ENCODE measurements at regions of chr2 and their contacts with region 1.

Region 1: GRCh38 chr2:210324458-210324857 is 9.5 kb upstream of the MYL1 start:
- DNase-seq: peak in 1 of 2 donors; percentile 58
- ATAC-seq: peak; percentile 83 to 96
- H3K4me3 ChIP-seq: peak overlapping the region; percentile 5 to 39 (median 20)
- H3K27ac ChIP-seq: peak overlapping the region; percentile 61 to 85 (median 76)
- H3K4me1 ChIP-seq: peaks cover 18 to 20% of the 10 kb centered on the region in 2 donors
- H3K27me3 ChIP-seq: no peaks in the 10 kb centered on the region
- CTCF ChIP-seq: no peak
- POLR2A ChIP-seq: no peak

Region 2: GRCh38 chr2:210086292-210086691 is 238.2 kb before region 1 on chr2:
- in situ Hi-C with region 1: no loop called
- intact Hi-C with region 1: no loop called
- DNase-seq: no peak
- ATAC-seq: no peak
- H3K4me3 ChIP-seq: no peak overlapping the region
- H3K27ac ChIP-seq: no peak overlapping the region
- H3K4me1 ChIP-seq: no peaks in the 10 kb centered on the region
- H3K27me3 ChIP-seq: no peaks in the 10 kb centered on the region
- CTCF ChIP-seq: no peak
- POLR2A ChIP-seq: no peak

Region 3: DNA sequence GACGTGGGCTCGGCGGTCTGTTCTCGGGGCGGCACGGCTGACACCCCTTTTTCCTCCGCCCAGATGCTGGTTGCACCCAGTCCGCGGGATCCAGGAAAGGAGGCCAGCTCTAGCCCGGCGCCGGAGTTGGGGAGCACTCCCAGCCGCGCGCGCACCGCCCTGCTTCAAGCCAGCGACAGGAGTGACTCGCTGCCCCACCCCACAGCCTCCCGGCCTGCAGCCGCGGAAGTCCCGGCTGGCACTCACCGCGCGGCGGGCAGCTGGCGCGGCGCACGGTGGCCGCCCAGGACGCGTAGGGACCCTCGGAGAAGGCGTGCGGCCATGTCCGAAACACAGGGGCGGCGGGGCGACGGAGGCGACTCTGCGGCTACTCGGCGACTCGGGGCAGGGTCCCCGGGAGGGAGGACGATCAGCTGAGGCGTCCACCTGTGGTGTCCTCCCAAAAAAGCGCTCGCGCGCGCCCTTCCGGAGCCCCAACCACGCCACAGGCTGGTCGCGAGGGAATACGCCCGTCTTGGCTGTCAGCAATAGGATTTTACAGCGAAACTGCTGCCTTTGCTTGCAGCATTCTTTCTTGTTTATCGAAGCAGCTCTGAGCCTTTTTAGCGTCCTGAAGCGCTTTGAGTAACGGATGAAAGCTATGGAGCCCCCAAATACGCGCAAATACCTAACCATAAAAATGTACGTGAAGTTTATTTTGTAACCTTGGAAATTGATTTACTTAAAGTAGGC is 99.4 kb before region 1 on chr2 and contains the start of gene ACADL:
- in situ Hi-C with region 1: no loop called
- intact Hi-C with region 1: loop called (anchors 5 kb)
- DNase-seq: peak; percentile 32 to 48
- ATAC-seq: peak; percentile 84 to 88
- H3K4me3 ChIP-seq: peak within 1 kb of the TSS; percentile 63 to 74 (median 70)
- H3K27ac ChIP-seq: peak within 1 kb of the TSS; percentile 64 to 78 (median 73)
- H3K4me1 ChIP-seq: peaks cover 0 to 5% of the 10 kb centered on the region in 2 donors
- H3K27me3 ChIP-seq: no peaks in the 10 kb centered on the region
- CTCF ChIP-seq: no peak
- POLR2A ChIP-seq: peak; percentile 27 to 64
- total RNA-seq, gene ACADL: 1.6 to 8.2 (median 5.3) TPM

Region 4: GRCh38 chr2:210252699-210253606 is 71.5 kb before region 1 on chr2:
- in situ Hi-C with region 1: no loop called
- intact Hi-C with region 1: loop called (anchors 5 kb)
- DNase-seq: no peak
- ATAC-seq: no peak
- H3K4me3 ChIP-seq: no peak overlapping the region
- H3K27ac ChIP-seq: no peak overlapping the region
- H3K4me1 ChIP-seq: peaks cover 0 to 7% of the 10 kb centered on the region in 2 donors
- H3K27me3 ChIP-seq: no peaks in the 10 kb centered on the region
- CTCF ChIP-seq: no peak
- POLR2A ChIP-seq: no peak

Region 5: GRCh38 chr2:210392469-210392951 is 68.1 kb after region 1 on chr2:
- in situ Hi-C with region 1: no loop called
- intact Hi-C with region 1: loop called (anchors 5 kb)
- DNase-seq: peak; percentile 45 to 64
- ATAC-seq: peak; percentile 97 to 99
- H3K4me3 ChIP-seq: peak overlapping the region in 3 of 4 donors; percentile 18 to 31 (median 26)
- H3K27ac ChIP-seq: peak overlapping the region; percentile 70 to 79 (median 76)
- H3K4me1 ChIP-seq: peaks cover 18 to 27% of the 10 kb centered on the region in 2 donors
- H3K27me3 ChIP-seq: no peaks in the 10 kb centered on the region
- CTCF ChIP-seq: no peak
- POLR2A ChIP-seq: no peak